Endothelial cell of umbilical vein (primary cell): ENCODE measurements at regions of chr3 and their contacts with region 1.

Region 1: DNA sequence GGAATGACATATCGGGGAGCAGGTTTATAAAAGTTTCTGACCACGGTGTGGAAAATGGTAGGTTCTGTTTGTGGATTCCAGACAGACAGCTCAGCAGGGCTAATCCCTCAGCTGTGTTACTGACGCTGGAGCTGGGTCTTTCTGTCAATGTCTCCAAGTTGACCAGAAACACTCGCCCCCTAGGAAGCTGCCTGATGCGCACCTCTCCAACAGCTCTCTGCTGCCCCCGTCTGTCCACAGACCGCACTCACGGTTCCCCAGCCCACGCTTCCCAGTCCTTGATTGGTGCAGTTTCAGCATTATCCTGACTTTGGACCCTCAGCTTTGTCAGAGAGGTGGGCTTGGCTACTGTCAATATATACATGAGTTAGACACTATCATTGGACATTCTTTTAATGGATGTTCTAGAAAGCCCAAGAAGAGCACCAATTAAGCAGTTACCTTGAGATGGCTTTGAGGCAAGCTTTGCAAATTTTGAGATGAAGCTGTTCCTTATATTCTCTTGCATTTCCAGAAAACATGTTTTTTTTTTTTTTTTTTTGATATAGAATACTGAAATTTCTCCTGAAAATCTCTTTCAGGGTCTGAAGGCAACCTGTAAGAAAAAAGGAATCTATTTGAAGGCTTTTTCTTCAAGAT is 98.9 kb upstream of the TBC1D5 start:
- DNase-seq: peak; percentile 64
- H3K4me3 ChIP-seq: no peak overlapping the region
- H3K27ac ChIP-seq: no peak overlapping the region
- H3K4me1 ChIP-seq: no peaks in the 10 kb centered on the region
- H3K27me3 ChIP-seq: peaks cover 0 to under 1% of the 10 kb centered on the region in 2 experiments
- CTCF ChIP-seq: peak; percentile 96
- POLR2A ChIP-seq: no peak

Region 2: GRCh38 chr3:16600780-16601539 is 1240.3 kb before region 1 on chr3:
- CTCF ChIA-PET with region 1: interaction called, 22 read pairs
- POLR2A ChIA-PET with region 1: no interaction called
- dilution Hi-C with region 1: no loop called
- intact Hi-C with region 1: loop called (anchors 1 kb)
- DNase-seq: peak; percentile 80
- H3K4me3 ChIP-seq: no peak overlapping the region
- H3K27ac ChIP-seq: no peak overlapping the region
- H3K4me1 ChIP-seq: no peaks in the 10 kb centered on the region
- H3K27me3 ChIP-seq: peaks cover 0 to 6% of the 10 kb centered on the region in 2 experiments
- CTCF ChIP-seq: peak; percentile 56 to 61
- POLR2A ChIP-seq: no peak

Region 3: DNA sequence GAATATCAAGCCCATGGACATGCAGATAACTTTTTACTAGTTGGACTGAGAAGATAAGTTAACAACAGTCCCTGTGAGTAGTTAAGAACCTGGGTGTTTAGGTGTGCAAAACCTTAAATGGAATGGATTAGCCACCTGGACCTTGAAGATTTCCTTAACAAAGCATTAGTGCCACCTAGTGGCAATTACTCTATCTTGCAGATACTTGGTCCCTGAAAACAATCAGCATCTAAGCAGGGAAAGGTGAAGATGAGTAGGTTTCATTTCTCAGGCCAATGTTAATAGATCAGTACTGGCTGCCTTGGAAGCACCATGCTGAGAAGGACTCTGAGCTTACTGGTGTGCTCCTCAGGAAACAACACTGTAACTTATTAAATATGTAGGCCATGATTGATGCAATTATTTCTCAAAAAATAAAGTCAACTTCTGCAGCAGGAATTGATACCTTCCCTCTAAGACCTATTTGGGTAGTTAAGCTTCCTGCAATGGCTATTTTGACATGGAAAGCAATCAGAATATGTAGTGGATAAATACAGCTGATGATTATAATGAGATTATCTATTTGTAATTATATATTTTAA is 428.3 kb before region 1 on chr3:
- CTCF ChIA-PET with region 1: interaction called, 20 read pairs
- POLR2A ChIA-PET with region 1: no interaction called
- dilution Hi-C with region 1: no loop called
- intact Hi-C with region 1: no loop called
- DNase-seq: peak; percentile 63
- H3K4me3 ChIP-seq: no peak overlapping the region
- H3K27ac ChIP-seq: no peak overlapping the region
- H3K4me1 ChIP-seq: no peaks in the 10 kb centered on the region
- H3K27me3 ChIP-seq: no peaks in the 10 kb centered on the region
- CTCF ChIP-seq: peak; percentile 56 to 63
- POLR2A ChIP-seq: no peak

Region 4: GRCh38 chr3:17431004-17431403 is 410.3 kb before region 1 on chr3:
- CTCF ChIA-PET with region 1: interaction called, 152 read pairs
- POLR2A ChIA-PET with region 1: no interaction called
- dilution Hi-C with region 1: loop called (anchors 25 kb)
- intact Hi-C with region 1: loop called (anchors 1 kb)
- DNase-seq: peak; percentile 49
- H3K4me3 ChIP-seq: no peak overlapping the region
- H3K27ac ChIP-seq: no peak overlapping the region
- H3K4me1 ChIP-seq: no peaks in the 10 kb centered on the region
- H3K27me3 ChIP-seq: no peaks in the 10 kb centered on the region
- CTCF ChIP-seq: peak in 1 of 2 donors; percentile 14
- POLR2A ChIP-seq: no peak

Region 5: GRCh38 chr3:17544632-17545031 is 296.7 kb before region 1 on chr3:
- CTCF ChIA-PET with region 1: interaction called, 33 read pairs
- POLR2A ChIA-PET with region 1: no interaction called
- dilution Hi-C with region 1: no loop called
- intact Hi-C with region 1: loop called (anchors 1 kb)
- DNase-seq: no peak
- H3K4me3 ChIP-seq: no peak overlapping the region
- H3K27ac ChIP-seq: no peak overlapping the region
- H3K4me1 ChIP-seq: no peaks in the 10 kb centered on the region
- H3K27me3 ChIP-seq: no peaks in the 10 kb centered on the region
- CTCF ChIP-seq: no peak
- POLR2A ChIP-seq: no peak

Region 6: DNA sequence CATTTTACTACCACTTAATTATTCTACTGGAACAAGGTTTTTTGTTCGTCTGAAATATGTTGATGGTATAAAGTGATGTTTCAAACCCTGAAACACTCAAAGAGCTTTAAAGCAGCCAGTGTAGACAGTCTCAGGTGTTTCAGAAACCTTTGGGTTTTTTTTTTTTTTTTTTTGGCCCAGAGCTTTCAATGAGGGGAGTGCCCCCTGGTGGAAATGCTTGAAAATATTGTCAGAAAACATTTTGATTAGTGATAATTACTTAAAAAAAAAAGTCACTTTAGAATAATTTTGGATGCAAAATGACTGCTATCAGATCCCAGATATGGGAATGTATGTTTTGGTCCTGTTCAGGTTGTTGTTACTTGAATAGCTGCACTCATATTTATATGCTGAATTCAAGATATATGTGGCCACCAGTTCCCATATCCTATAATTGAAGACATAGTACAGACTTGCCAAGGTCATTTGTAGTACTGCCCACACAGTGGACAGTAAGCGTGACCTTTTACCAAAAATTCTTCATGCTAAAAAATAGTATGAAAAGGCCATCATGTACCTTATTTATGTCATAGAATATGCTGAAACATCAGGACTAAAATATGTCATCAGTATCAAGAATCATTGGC is 547.9 kb after region 1 on chr3:
- CTCF ChIA-PET with region 1: interaction called, 10 read pairs
- POLR2A ChIA-PET with region 1: no interaction called
- dilution Hi-C with region 1: no loop called
- intact Hi-C with region 1: no loop called
- DNase-seq: peak; percentile 33
- H3K4me3 ChIP-seq: no peak overlapping the region
- H3K27ac ChIP-seq: no peak overlapping the region
- H3K4me1 ChIP-seq: no peaks in the 10 kb centered on the region
- H3K27me3 ChIP-seq: no peaks in the 10 kb centered on the region
- CTCF ChIP-seq: peak; percentile 33 to 45
- POLR2A ChIP-seq: no peak